ENCODE measurements at regions of chr4 and their contacts with region 1.

Region 1: DNA sequence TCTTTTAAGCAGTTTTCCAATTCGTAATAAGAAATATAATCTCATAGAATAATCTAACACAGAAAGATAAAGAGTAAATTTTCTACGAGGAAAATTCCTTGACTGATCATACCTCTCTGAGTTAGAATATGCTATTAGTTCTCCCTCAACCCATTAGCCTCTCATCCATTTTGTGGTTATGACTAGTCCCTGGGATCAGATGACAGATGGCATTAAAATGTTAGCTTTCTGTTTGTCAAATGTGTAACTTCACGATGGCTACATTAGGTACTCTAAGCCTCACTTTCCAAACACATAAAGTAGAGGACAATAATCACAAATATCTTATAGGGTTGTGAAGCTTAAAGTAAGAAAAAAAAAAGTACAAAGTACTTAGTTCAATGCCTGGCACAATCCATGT is 112.2 kb downstream of the ZAR1 start:
- DNase-seq: no peak
- ATAC-seq: no peak

Region 2: DNA sequence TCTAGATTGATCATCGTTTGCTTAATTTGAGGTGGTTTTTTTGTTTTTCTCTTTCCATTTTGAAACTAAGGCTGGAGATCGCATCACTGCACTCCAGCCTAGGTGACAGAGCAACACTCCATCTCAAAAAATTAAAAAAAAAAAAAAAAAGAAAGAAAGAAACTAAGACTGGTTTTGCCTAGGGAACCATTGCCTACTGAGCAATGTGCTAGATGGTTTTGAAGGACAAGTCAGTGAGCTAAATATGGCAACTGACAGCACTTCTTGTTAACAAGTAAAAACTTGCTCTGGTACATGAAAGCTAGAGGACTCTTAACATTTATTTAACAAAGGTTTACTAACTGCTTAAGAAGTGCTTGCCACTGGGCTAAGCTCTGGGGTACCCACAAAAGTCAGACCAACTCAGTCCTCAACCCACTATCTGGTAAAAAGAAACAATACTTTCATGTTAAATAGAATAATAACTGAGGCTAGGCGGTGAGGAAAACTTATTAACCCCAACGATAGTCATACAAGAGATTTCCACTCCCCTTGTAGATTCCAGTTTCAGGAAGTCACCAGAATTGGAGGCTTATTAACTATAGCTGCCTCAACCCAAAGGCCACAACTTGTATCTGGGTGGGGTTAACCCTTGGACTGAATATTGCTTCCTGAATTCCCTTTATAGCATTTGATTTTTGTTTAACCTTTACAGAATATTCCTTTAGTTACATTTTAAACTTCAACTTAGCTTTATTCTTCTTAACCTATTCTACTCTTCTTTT is 66.2 kb after region 1 on chr4:
- intact Hi-C with region 1: loop called (anchors 10 kb)
- DNase-seq: no peak
- ATAC-seq: peak; percentile 82

Measured in Right ventricle myocardium superior (tissue), 1 donor.